Ascending aorta (tissue), 2 donors: ENCODE measurements at regions of chr14 and their contacts with region 1.

Region 1: DNA sequence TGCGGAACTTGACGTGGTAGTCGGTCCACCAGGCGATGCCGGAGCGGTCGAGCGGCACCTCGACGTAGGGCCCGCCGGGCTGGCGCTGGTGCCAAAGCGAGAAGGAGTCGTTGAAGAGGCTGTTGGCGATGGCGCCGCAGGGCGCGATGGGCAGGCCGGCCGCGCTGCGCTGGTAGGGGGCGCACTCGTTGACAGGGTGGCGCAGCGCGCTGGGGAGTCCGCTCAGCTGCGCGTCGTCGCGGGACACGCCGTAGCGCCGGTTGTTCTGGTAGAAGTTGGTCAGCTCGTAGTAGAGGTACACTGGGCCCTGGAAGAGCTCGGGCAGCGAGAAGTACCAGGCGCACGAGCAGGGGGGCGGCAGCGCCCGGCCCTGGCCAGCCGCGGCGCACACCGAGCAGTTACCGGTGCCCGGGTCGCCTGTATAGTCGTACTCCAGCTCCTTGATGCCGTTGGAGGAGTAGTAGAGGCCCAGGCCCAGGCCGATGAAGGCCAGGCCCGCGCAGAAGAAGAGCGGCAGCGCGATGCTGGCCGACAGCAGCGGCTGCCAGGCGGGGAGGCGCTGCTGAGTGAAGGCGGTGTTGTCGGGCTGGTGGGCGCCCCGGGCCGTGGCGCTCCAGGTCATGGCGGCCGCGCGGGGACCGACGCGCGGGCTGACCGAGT is 482 bp downstream of the TMEM30B start:
- DNase-seq: peak in 1 of 2 donors; percentile 81
- H3K4me3 ChIP-seq: peak overlapping the region; percentile 66 to 70
- H3K27ac ChIP-seq: peak overlapping the region; percentile 94 to 96
- H3K4me1 ChIP-seq: peaks cover 0 to 9% of the 10 kb centered on the region in 2 donors
- H3K27me3 ChIP-seq: no peaks in the 10 kb centered on the region
- CTCF ChIP-seq: peak; percentile 32 to 61 (median 35)

Region 2: DNA sequence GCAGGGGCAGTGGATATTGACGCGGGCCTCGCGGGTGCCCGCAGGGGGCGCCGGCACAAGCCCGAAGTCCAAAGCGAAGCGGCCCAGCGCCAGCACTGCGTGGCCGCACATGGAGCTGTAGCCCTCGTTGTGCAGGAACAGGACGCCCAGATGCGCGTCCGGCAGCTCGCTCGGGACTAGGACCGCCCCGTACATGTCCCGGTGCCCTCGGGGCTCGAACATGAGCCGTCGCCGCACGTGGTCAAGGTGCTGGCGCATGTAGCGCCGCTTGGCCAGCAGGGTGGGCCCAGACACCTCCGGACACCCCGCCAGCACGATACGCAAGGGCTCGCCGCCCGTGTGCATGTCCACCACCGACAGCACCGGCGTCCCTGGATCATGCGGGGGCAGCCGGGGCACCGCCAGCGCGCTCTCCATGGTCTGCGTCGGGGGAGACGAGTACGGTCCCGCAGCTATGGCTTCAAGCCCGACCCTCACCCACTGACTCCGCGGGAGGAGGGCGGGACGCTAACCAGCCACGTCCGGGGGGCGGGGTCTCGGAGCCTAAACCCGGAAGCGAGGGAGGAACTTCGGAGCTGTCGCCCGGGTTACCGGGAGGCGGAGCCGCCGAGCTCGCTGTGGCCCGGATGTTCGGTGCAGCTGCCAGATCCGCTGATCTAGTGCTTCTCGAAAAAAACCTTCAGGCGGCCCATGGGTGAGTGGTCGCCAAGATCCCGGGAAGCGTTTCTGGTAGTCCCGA is 1796.6 kb before region 1 on chr14 and contains the starts of genes JKAMP and L3HYPDH:
- intact Hi-C with region 1: loop called (anchors 10 kb)
- DNase-seq: peak; percentile 90 to 98
- H3K4me3 ChIP-seq: peak within 1 kb of the TSS; percentile 76 to 96
- H3K27ac ChIP-seq: peak within 1 kb of the TSS; percentile 85 to 96
- H3K4me1 ChIP-seq: peaks cover 5 to 20% of the 10 kb centered on the region in 2 donors
- H3K27me3 ChIP-seq: no peaks in the 10 kb centered on the region
- CTCF ChIP-seq: peak; percentile 50 to 74 (median 70)
- total RNA-seq, gene JKAMP: 28.2 TPM
- total RNA-seq, gene L3HYPDH: 35.0 TPM

Region 3: GRCh38 chr14:61147831-61148549 is 132.7 kb before region 1 on chr14:
- intact Hi-C with region 1: loop called (anchors 5 kb)
- DNase-seq: peak; percentile 36 to 84
- H3K4me3 ChIP-seq: no peak overlapping the region
- H3K27ac ChIP-seq: peak overlapping the region; percentile 88 to 92
- H3K4me1 ChIP-seq: peaks cover 4 to 60% of the 10 kb centered on the region in 2 donors
- H3K27me3 ChIP-seq: no peaks in the 10 kb centered on the region
- CTCF ChIP-seq: no peak

Region 4: DNA sequence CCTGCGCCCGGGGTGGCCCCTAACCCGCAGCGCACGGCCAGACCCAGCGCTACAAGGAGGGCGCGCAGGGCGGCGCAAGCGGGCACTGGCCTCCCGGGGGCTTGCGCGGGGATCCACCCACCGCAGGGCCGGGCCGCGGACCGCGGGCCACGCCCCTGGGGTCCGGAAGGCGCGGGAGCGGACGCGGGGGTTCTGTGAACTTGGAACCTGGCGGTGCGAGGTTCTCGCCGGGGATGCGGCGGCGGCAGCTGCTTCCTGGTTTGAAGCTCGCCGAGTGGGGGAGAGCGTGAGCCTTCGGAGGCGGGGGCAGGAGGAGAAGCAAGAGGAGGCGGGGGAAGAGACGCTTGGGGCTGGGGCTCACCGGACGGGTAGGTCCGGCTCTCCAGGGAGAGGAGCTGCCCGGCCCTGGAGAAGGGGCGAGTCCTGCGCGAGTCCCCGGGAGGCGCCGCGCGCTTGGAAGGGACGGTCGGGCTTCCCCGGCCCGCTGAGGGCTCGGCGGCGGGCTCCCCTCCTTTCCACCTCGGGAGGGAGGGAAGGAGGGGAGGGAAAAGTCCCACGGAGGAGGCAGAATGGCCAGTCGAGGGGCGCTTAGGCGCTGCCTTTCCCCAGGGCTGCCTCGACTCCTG is 40.8 kb after region 1 on chr14 and contains the start of gene PRKCH:
- intact Hi-C with region 1: no loop called
- DNase-seq: peak in 1 of 2 donors; percentile 82
- H3K4me3 ChIP-seq: peak within 1 kb of the TSS; percentile 61 to 74
- H3K27ac ChIP-seq: peak within 1 kb of the TSS; percentile 29 to 43
- H3K4me1 ChIP-seq: peaks cover 0 to 6% of the 10 kb centered on the region in 2 donors
- H3K27me3 ChIP-seq: no peaks in the 10 kb centered on the region
- CTCF ChIP-seq: peak in 1 of 3 experiments; percentile 16
- total RNA-seq, gene PRKCH: 20.2 TPM

Region 5: GRCh38 chr14:61585598-61586543 is 305.2 kb after region 1 on chr14:
- intact Hi-C with region 1: loop called (anchors 10 kb)
- DNase-seq: peak; percentile 39 to 91
- H3K4me3 ChIP-seq: no peak overlapping the region
- H3K27ac ChIP-seq: peak overlapping the region; percentile 85 to 86
- H3K4me1 ChIP-seq: peaks cover 22 to 26% of the 10 kb centered on the region in 2 donors
- H3K27me3 ChIP-seq: no peaks in the 10 kb centered on the region
- CTCF ChIP-seq: no peak

Region 6: GRCh38 chr14:61837336-61838229 is 556.9 kb after region 1 on chr14:
- intact Hi-C with region 1: loop called (anchors 10 kb)
- DNase-seq: peak; percentile 14 to 84
- H3K4me3 ChIP-seq: no peak overlapping the region
- H3K27ac ChIP-seq: no peak overlapping the region
- H3K4me1 ChIP-seq: no peaks in the 10 kb centered on the region
- H3K27me3 ChIP-seq: no peaks in the 10 kb centered on the region
- CTCF ChIP-seq: peak; percentile 83 to 96 (median 90)